Activated CD8-positive, alpha-beta memory T cell treated with anti-CD3 and anti-CD28 coated beads, Interleukin-2, amount 10 ng/mL, durations not matched to agents 7 days and 5 days (primary cell): ENCODE measurements at regions of chr12 and their contacts with region 1.

Region 1: GRCh38 chr12:47736877-47737676 is 11.8 kb upstream of the ENDOU start:
- DNase-seq: no peak
- ATAC-seq: no peak
- H3K4me3 Mint-ChIP-seq: no peak overlapping the region
- H3K27ac Mint-ChIP-seq: no peak overlapping the region
- H3K4me1 Mint-ChIP-seq: peaks cover 9% of the 10 kb centered on the region
- H3K27me3 Mint-ChIP-seq: no peaks in the 10 kb centered on the region

Region 2: DNA sequence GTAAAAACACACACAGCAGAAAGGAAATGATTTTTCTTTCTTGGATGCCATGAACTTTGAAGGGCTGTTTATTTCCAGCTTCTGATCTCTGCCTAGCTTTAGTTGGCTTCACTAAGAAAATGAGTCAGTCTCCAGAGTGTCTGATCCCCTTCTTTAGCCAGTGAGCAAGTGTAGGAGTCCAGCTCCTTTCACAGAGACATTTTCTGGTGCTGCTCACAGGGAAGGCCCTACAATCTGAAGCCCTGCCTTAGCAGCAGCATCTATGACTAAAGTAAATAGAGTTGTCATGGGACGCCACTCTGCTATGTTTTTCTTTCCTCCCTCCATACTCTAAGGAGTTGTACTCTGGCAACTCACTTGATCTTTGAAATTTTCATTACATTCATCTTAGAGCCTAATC is 134.8 kb before region 1 on chr12:
- CTCF ChIA-PET with region 1: no interaction called
- DNase-seq: no peak
- ATAC-seq: no peak
- H3K4me3 Mint-ChIP-seq: no peak overlapping the region
- H3K27ac Mint-ChIP-seq: no peak overlapping the region
- H3K4me1 Mint-ChIP-seq: peaks cover 3% of the 10 kb centered on the region
- H3K27me3 Mint-ChIP-seq: no peaks in the 10 kb centered on the region

Region 3: DNA sequence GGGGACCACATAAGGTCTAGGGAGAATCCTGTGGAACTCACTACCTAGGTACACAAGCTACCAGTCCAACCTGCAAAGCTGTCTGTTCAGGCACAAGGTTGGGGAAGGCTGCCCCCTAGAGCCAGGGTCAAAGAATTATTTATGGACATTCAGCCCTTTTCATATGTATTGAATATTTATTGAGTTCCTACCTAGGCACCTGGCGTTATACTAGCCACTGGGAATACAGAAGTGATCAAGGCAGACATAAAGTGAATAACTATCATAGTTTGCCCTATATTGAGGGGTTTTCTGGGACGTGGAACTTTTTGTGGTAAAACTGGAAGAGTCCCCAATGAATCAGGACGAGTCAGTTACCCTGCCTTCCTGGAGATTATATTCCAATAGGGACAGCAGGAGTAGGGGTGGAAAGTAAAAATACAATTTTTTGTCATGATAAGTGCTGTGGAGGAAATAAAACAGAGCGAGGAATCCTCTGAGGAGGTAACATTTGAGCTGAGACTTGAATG is 30.2 kb after region 1 on chr12:
- CTCF ChIA-PET with region 1: interaction called, 954 read pairs
- DNase-seq: peak; percentile 89
- ATAC-seq: peak; percentile 85
- H3K4me3 Mint-ChIP-seq: no peak overlapping the region
- H3K27ac Mint-ChIP-seq: peak overlapping the region; percentile 58
- H3K4me1 Mint-ChIP-seq: peaks cover 27% of the 10 kb centered on the region
- H3K27me3 Mint-ChIP-seq: peaks cover 16% of the 10 kb centered on the region